B cell (primary cell): ENCODE measurements at regions of chr5 and their contacts with region 1.

Region 1: DNA sequence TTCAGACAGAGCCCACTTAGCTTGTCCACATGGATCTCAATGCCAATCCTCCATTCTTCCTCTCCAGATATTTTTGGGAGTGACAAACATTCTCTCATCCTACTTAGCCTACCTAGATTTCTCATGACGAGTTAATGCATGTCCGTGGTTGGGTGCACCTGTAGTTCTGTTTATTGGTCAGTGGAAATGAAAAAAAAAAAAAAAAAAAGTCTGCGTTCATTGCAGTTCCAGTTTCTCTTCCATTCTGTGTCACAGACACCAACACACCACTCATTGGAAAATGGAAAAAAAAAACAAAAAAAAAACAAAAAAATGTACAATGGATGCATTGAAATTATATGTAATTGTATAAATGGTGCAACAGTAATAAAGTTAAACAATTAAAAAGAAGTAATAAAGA is 59.0 kb downstream of the BASP1 start:
- DNase-seq: peak; percentile 55
- ATAC-seq: peak; percentile 29
- H3K4me3 ChIP-seq: peak overlapping the region in 1 of 5 experiments; percentile 21
- H3K4me3 Mint-ChIP-seq: peak overlapping the region; percentile 57
- H3K27ac ChIP-seq: peak overlapping the region; percentile 54 to 85
- H3K27ac Mint-ChIP-seq: peak overlapping the region; percentile 85
- H3K4me1 ChIP-seq: peaks cover 61 to 63% of the 10 kb centered on the region in 2 donors
- H3K4me1 Mint-ChIP-seq: peaks cover 82% of the 10 kb centered on the region
- H3K27me3 ChIP-seq: no peaks in the 10 kb centered on the region
- H3K27me3 Mint-ChIP-seq: no peaks in the 10 kb centered on the region
- CTCF ChIP-seq: no peak

Region 2: DNA sequence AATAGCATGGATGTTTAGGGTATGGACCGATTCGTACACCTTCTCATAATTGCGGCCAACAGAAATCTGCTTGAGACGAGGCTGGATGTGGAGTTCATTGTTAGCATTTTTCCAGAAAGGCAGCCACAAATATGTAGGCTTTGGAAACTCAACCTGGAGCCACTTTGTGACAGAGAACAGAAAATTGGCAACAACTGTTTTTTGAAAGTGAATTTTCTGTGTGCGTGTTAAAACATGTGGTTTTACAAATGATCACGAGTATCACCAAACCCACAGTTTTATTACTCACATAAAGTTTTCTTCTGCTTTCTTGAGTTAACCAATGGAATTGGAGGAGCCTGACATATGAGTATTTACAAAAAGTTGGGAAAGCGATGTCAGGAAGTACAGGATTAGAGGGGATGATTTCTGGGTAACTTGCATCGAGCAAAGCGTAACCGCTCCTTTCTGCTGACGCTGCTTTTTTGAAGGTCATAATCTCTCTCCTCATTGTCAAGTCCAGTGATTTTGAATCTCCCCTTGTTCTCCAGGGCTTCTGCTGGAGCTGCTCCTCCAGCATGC is 83.1 kb after region 1 on chr5:
- CTCF ChIA-PET with region 1: no interaction called
- POLR2A ChIA-PET with region 1: interaction called, 10 read pairs
- intact Hi-C with region 1: no loop called
- DNase-seq: no peak
- ATAC-seq: no peak
- H3K4me3 ChIP-seq: no peak overlapping the region
- H3K4me3 Mint-ChIP-seq: no peak overlapping the region
- H3K27ac ChIP-seq: no peak overlapping the region
- H3K27ac Mint-ChIP-seq: no peak overlapping the region
- H3K4me1 ChIP-seq: peaks cover 9 to 10% of the 10 kb centered on the region in 2 donors
- H3K4me1 Mint-ChIP-seq: peaks cover 15% of the 10 kb centered on the region
- H3K27me3 ChIP-seq: no peaks in the 10 kb centered on the region
- H3K27me3 Mint-ChIP-seq: no peaks in the 10 kb centered on the region
- CTCF ChIP-seq: no peak

Region 3: DNA sequence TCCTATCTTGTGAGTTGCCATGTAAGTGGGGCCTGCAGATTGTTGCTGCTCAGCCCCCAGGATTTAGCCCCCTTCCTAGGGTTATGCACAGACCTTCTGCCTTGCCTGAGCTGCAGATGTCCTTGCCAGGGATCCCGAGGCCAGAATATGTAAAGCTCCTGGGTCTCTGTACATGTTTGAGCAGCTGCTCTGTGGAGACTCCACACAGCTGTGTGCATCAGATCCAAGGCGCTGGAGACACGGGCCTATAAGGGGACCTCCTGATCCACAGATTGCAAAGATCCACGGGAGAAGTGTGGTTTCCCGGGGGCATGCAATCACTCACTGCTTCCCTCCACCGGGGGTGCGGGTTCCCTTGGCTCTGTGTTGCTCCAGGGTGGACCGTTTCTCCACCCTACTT is 386.7 kb after region 1 on chr5:
- CTCF ChIA-PET with region 1: no interaction called
- POLR2A ChIA-PET with region 1: no interaction called
- intact Hi-C with region 1: no loop called
- DNase-seq: no peak
- ATAC-seq: no peak
- H3K4me3 ChIP-seq: no peak overlapping the region
- H3K4me3 Mint-ChIP-seq: no peak overlapping the region
- H3K27ac ChIP-seq: no peak overlapping the region
- H3K27ac Mint-ChIP-seq: no peak overlapping the region
- H3K4me1 ChIP-seq: peaks cover 11 to 16% of the 10 kb centered on the region in 2 donors
- H3K4me1 Mint-ChIP-seq: peaks cover 19% of the 10 kb centered on the region
- H3K27me3 ChIP-seq: no peaks in the 10 kb centered on the region
- H3K27me3 Mint-ChIP-seq: no peaks in the 10 kb centered on the region
- CTCF ChIP-seq: no peak